Endothelial cell of umbilical vein (primary cell): ENCODE measurements at regions of chr10 and their contacts with region 1.

Region 1: DNA sequence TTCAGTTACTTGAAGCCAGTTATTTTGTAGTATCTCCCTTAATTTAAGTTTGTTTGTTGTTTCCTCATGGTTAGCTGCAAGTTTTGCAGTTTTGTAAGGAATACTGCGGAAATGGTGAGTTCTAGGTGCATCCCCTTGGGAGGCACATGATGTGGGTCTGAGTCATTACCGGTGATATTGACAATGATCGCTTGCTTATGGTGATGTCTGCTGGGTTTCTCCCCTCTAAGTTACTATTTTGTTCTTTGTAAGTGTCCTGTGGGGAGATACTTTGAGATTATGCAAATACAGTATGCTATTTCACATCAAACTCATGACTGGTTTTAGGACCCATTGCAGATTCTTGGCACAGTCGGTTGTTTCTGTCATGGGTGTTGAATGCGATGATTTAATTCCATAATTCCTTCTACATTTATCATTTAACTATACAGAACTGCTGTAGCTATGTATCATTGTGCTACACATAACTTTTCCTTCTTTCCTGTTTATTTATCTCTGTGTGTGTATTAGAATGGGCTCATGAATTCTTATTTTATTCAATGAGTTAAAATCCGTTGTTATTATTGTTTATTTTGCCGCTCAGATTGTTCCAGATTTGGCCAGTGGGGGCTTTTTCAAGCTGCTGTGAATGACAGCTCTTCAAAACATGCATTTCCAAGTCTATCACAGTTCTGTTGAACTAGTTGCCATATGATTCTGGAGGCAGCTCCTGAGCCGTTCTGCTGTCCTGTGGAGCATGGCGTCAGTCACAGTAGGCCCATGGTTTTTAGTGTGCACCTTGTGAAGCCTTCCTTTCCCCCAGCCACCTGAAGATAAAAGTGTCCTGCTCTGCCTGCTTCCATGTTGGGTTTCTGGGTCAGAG is 18.4 kb downstream of the TSPAN14 start:
- DNase-seq: peak; percentile 57
- H3K4me3 ChIP-seq: no peak overlapping the region
- H3K27ac ChIP-seq: peak overlapping the region; percentile 48
- H3K4me1 ChIP-seq: peaks cover 82% of the 10 kb centered on the region
- H3K27me3 ChIP-seq: no peaks in the 10 kb centered on the region
- CTCF ChIP-seq: peak in 1 of 2 donors; percentile 10
- POLR2A ChIP-seq: no peak

Region 2: GRCh38 chr10:80459047-80459931 is 13.2 kb before region 1 on chr10:
- CTCF ChIA-PET with region 1: interaction called, 13 read pairs
- POLR2A ChIA-PET with region 1: interaction called, 4 read pairs
- dilution Hi-C with region 1: no loop called
- intact Hi-C with region 1: loop called (anchors 2 kb)
- DNase-seq: no peak
- H3K4me3 ChIP-seq: peak overlapping the region in 1 of 3 experiments; percentile 13
- H3K27ac ChIP-seq: peak overlapping the region; percentile 42
- H3K4me1 ChIP-seq: peaks cover 84% of the 10 kb centered on the region
- H3K27me3 ChIP-seq: no peaks in the 10 kb centered on the region
- CTCF ChIP-seq: no peak
- POLR2A ChIP-seq: no peak